ENCODE measurements at regions of chr2 and their contacts with region 1.

Region 1: GRCh38 chr2:42962508-42962953 is 170.1 kb upstream of the HAAO start:
- DNase-seq: peak in 11 of 35 experiments; percentile 6 to 38 (median 20)
- ATAC-seq: peak; percentile 44 to 81 (median 48)
- H3K4me3 ChIP-seq: peak overlapping the region in 1 of 2 donors; percentile 40
- H3K4me3 Mint-ChIP-seq: peak overlapping the region in 1 of 3 donors; percentile 52
- H3K27ac ChIP-seq: no peak overlapping the region
- H3K27ac Mint-ChIP-seq: no peak overlapping the region
- H3K4me1 ChIP-seq: peaks cover 8 to 22% of the 10 kb centered on the region in 2 experiments
- H3K4me1 Mint-ChIP-seq: peaks cover 13 to 20% (median 17%) of the 10 kb centered on the region in 3 donors
- H3K27me3 ChIP-seq: peaks cover 0 to 35% of the 10 kb centered on the region in 2 experiments
- H3K27me3 Mint-ChIP-seq: peaks cover 4 to 18% of the 10 kb centered on the region in 2 donors

Region 2: GRCh38 chr2:42770288-42771131 is 192.0 kb before region 1 on chr2:
- CTCF ChIA-PET with region 1: no interaction called
- POLR2A ChIA-PET with region 1: no interaction called
- DNase-seq: peak in 1 of 35 experiments; percentile 24
- ATAC-seq: peak in 1 of 4 experiments; percentile 36
- H3K4me3 ChIP-seq: no peak overlapping the region
- H3K4me3 Mint-ChIP-seq: no peak overlapping the region
- H3K27ac ChIP-seq: no peak overlapping the region
- H3K27ac Mint-ChIP-seq: no peak overlapping the region
- H3K4me1 ChIP-seq: peaks cover 0 to 4% of the 10 kb centered on the region in 2 experiments
- H3K4me1 Mint-ChIP-seq: peaks cover 6 to 14% (median 9%) of the 10 kb centered on the region in 3 donors
- H3K27me3 ChIP-seq: no peaks in the 10 kb centered on the region
- H3K27me3 Mint-ChIP-seq: no peaks in the 10 kb centered on the region

Region 3: GRCh38 chr2:42944779-42945415 is 17.6 kb before region 1 on chr2:
- CTCF ChIA-PET with region 1: interaction called, 3 to 13 read pairs
- POLR2A ChIA-PET with region 1: no interaction called
- DNase-seq: no peak
- ATAC-seq: no peak
- H3K4me3 ChIP-seq: no peak overlapping the region
- H3K4me3 Mint-ChIP-seq: no peak overlapping the region
- H3K27ac ChIP-seq: no peak overlapping the region
- H3K27ac Mint-ChIP-seq: no peak overlapping the region
- H3K4me1 ChIP-seq: no peaks in the 10 kb centered on the region
- H3K4me1 Mint-ChIP-seq: peaks cover 0 to 5% (median 2%) of the 10 kb centered on the region in 3 donors
- H3K27me3 ChIP-seq: peaks cover 0 to 12% of the 10 kb centered on the region in 2 experiments
- H3K27me3 Mint-ChIP-seq: no peaks in the 10 kb centered on the region

Measured in T-cell (primary cell).